Right ventricle myocardium inferior (tissue), 1 donor: ENCODE measurements at regions of chr7 and their contacts with region 1.

Region 1: GRCh38 chr7:33932832-33933468 is 27.6 kb downstream of the BMPER start:
- DNase-seq: peak; percentile 88
- ATAC-seq: peak; percentile 90

Region 2: DNA sequence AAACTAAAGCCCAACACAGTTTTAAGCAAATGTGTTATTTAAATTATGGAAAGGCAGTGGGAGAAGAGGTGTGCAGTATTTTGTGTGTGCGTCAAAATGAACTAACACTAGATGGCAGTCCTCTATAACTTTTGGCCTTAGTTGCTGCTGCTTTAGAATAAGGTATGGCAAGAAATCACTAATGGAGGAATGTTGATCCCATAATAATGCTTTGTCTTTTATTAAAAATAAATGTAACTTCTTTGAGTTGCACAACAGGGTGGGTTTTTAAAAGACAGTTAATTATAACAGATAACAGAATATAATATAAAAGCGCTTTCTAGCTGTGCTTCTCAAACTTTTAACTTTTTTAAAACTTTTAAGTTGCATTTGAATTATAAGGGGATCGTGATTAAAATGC is 747.2 kb before region 1 on chr7:
- intact Hi-C with region 1: loop called (anchors 5 kb)
- DNase-seq: no peak
- ATAC-seq: no peak

Region 3: DNA sequence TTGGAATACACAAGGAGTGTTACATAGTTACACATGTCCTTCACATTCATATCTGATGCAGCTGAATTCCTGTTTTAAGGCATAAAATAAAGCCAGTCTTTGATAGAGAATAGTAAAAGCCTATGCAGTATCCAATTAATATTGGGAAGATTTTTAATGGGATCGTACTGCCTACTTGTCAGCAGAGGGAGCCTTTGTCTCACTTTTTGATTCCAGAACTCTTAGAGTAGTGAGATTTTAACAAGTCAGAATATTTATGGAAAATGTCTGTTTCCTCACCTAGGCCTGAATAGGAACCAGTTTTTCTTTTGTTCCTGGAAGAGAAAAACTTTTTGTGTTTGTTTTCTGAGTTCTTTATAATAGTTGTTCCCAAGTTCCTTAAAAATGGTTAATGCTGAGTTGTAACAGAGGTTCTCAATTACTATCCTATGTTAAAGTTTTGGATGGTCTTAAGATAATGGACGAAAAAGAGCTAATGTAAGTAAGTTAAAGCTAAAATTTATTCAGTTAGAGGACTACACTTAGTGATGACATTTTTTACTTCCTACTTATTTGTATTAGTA is 689.5 kb before region 1 on chr7:
- intact Hi-C with region 1: loop called (anchors 5 kb)
- DNase-seq: no peak
- ATAC-seq: no peak

Region 4: DNA sequence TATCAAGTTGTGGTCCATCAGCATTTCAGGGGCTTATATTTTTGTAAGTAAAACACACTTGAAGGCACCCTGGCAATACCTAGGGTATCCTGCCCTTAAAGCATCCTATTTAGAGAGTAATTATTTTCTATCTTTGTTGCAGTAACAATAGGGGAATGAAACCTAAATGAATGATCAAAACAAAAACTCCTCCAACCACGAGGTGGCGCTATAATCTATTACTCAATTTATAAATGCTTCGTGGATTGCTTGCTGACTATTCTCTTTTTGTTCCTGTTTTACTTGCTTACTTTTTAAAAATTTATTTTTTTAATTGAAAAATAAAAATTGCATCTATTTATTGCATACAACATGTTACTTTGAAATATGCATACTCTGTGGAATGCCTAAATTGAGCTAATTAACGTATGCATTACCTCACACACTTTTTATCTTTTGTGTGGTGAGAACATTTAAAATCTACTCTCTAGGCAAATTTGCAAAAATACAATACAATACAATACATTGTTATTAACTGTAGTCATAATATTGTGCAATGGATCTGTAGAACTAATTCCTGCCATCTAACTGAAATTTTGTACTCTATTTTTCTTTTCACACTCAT is 175.3 kb before region 1 on chr7:
- intact Hi-C with region 1: loop called (anchors 1 kb)
- DNase-seq: no peak
- ATAC-seq: no peak